ENCODE measurements at regions of chr4 and their contacts with region 1.

Region 1: DNA sequence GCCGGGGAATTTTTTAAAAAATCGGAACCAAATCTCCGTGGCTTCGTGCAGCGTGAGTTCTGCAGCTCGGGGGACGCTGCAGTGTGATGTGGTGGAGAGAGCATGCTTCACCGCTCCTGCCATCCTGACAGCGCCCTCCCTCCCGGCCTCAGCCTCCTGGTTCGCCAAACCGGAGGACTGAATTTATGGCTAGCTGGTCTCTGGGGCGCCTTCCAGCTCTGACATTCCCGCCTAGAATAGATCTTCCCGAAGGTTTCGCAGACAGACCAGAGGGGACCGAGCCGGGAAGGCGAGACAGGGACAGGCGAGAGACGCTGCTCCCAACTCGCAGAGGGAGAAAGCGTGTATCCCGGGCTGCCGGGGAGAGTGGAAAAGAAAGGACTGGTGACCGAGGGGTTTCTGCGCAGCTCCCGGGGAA is 25.9 kb downstream of the HOPX start:
- DNase-seq: peak in 2 of 3 donors; percentile 40 to 55
- H3K4me3 ChIP-seq: peak overlapping the region; percentile 72 to 94 (median 81)
- H3K27ac ChIP-seq: peak overlapping the region; percentile 6 to 52
- H3K4me1 ChIP-seq: peaks cover 14 to 94% (median 76%) of the 10 kb centered on the region in 4 experiments
- H3K27me3 ChIP-seq: no peaks in the 10 kb centered on the region

Region 2: DNA sequence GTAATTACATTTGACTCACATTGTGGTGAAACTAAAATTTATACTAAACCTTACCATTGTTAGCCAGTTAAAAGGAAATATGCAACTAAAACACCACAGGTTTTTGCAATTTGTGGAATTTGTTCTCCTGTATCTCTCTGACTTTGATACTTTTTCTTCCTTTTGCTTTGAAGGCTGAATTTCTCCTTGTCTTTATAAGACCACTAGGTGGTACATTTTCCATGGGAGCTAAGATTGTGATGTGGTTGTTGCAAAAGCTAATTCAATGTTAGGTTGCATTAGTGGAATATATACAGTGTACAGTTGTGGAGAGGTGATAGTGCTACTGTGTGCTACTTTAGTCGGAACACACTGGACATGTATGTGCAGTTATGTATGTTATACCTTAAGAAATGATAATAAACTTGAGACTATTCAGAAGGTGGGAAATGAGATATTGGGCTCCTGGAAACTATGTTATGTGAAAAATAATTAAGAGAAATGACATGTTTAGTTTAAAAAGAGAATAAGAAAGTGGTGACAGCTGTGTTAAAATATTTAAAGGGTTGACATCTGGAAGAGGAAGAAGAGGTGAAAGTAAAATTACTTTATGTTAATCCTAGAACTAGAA is 79.3 kb before region 1 on chr4:
- CTCF ChIA-PET with region 1: interaction called, 18 read pairs
- POLR2A ChIA-PET with region 1: no interaction called
- DNase-seq: peak; percentile 36 to 57 (median 55)
- H3K4me3 ChIP-seq: no peak overlapping the region
- H3K27ac ChIP-seq: no peak overlapping the region
- H3K4me1 ChIP-seq: peaks cover 0 to 15% (median 3%) of the 10 kb centered on the region in 4 experiments
- H3K27me3 ChIP-seq: no peaks in the 10 kb centered on the region

Region 3: DNA sequence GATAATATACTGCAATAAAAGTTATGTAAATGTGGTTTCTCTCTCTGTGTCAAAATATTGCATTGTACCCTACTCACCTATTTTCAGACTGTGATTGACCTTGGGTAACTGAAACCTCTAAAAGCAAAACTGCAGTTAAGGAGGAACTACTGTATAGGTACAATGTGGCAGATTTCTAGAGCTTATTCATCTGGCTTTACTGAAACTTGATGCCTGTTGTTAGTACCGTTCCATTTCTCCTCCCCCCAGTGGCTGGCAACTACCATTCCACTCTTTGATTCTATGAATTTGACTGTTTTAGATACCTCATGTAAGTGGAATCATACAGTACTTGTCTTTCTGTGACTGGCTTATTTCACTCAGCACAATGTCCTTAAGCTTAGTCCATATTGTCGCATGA is 36.1 kb before region 1 on chr4:
- CTCF ChIA-PET with region 1: interaction called, 10 read pairs
- POLR2A ChIA-PET with region 1: no interaction called
- DNase-seq: peak in 2 of 3 donors; percentile 37 to 44
- H3K4me3 ChIP-seq: no peak overlapping the region
- H3K27ac ChIP-seq: no peak overlapping the region
- H3K4me1 ChIP-seq: peaks cover 0 to 2% (median 0%) of the 10 kb centered on the region in 4 experiments
- H3K27me3 ChIP-seq: no peaks in the 10 kb centered on the region

Region 4: GRCh38 chr4:56630876-56631666 is 24.1 kb before region 1 on chr4:
- CTCF ChIA-PET with region 1: interaction called, 11 read pairs
- POLR2A ChIA-PET with region 1: no interaction called
- DNase-seq: no peak
- H3K4me3 ChIP-seq: no peak overlapping the region
- H3K27ac ChIP-seq: no peak overlapping the region
- H3K4me1 ChIP-seq: peaks cover 0 to 14% (median 1%) of the 10 kb centered on the region in 4 experiments
- H3K27me3 ChIP-seq: no peaks in the 10 kb centered on the region

Region 5: GRCh38 chr4:56641494-56642051 is 13.6 kb before region 1 on chr4:
- CTCF ChIA-PET with region 1: interaction called, 21 read pairs
- POLR2A ChIA-PET with region 1: no interaction called
- DNase-seq: no peak
- H3K4me3 ChIP-seq: no peak overlapping the region
- H3K27ac ChIP-seq: no peak overlapping the region
- H3K4me1 ChIP-seq: no peaks in the 10 kb centered on the region
- H3K27me3 ChIP-seq: no peaks in the 10 kb centered on the region

Region 6: DNA sequence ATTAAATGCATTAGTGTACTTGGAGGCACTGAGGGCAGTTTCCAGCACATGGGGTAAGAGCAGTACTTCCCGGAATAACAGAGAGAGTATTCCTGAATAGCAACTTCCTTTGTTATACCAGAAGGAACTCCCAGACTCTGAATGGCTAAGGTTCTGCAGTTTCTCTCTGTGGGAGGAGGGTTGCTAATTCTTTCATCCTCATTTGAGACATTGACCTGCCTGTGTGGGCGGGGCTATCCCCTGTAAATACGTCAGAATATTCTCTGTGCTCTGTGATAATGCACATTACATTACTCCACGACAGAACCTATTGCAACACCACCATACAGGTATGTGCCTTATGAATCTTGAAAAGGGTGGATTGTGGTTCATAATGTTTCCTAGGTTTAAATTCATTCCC is 113.5 kb after region 1 on chr4:
- CTCF ChIA-PET with region 1: no interaction called
- POLR2A ChIA-PET with region 1: no interaction called
- DNase-seq: no peak
- H3K4me3 ChIP-seq: no peak overlapping the region
- H3K27ac ChIP-seq: no peak overlapping the region
- H3K4me1 ChIP-seq: peaks cover 0 to 15% (median 8%) of the 10 kb centered on the region in 4 experiments
- H3K27me3 ChIP-seq: no peaks in the 10 kb centered on the region

Region 7: DNA sequence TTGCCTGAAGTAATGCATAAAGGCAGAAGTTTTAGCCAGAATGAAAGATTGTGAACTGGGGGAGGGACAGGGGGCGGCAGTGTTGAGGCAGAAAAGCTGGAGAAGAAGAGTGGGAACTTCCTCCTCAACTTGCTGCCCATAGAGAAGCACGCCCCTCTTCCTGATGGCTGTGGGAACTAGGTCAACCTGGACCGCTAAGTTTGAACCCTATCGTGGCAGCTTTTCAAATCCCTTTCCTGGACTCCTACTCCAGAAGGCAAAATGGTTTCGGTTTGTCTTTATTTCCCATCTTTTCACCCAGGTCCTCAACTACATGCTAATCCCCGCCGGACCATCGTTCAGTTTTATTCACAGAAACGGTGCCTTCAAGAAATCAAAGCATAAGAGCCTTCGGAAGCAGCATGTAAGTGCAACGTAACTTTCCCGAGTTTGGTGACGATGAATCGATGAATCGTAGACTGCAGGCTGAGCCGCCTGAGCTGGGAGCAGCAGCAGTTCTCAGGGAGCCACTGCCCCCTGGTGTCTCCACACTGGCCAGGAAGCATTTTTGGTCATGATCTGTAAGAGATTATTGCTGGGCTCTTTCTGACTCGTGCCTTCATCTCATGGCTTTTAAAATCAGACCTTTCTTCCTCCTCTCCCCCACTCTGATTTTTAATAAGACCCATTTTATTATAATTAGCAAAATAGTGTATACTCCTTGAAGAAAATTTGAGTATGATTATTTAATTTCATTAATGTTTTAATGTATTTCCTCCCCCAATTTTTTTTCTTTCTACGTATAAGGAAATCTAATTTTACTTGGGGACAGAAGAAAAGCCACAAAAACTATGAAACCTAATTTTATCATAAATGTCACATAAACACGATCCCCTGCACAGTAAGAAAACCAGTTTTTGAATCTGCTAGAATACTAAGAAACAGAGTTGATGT is 144.9 kb after region 1 on chr4:
- CTCF ChIA-PET with region 1: interaction called, 10 read pairs
- POLR2A ChIA-PET with region 1: interaction called, 3 read pairs
- DNase-seq: peak; percentile 90 to 95 (median 94)
- H3K4me3 ChIP-seq: peak overlapping the region; percentile 53 to 96 (median 89)
- H3K27ac ChIP-seq: peak overlapping the region; percentile 62 to 84
- H3K4me1 ChIP-seq: peaks cover 9 to 54% (median 44%) of the 10 kb centered on the region in 4 experiments
- H3K27me3 ChIP-seq: no peaks in the 10 kb centered on the region